ENCODE measurements at regions of chr6 and their contacts with region 1.

Region 1: GRCh38 chr6:157667211-157668008 is 155.6 kb upstream of the SNX9 start:
- DNase-seq: peak; percentile 74
- CTCF ChIP-seq: peak; percentile 71

Region 2: GRCh38 chr6:157314705-157315321 is 352.6 kb before region 1 on chr6:
- CTCF ChIA-PET with region 1: interaction called, 76 read pairs
- POLR2A ChIA-PET with region 1: no interaction called
- DNase-seq: peak; percentile 70
- CTCF ChIP-seq: peak; percentile 78

Region 3: DNA sequence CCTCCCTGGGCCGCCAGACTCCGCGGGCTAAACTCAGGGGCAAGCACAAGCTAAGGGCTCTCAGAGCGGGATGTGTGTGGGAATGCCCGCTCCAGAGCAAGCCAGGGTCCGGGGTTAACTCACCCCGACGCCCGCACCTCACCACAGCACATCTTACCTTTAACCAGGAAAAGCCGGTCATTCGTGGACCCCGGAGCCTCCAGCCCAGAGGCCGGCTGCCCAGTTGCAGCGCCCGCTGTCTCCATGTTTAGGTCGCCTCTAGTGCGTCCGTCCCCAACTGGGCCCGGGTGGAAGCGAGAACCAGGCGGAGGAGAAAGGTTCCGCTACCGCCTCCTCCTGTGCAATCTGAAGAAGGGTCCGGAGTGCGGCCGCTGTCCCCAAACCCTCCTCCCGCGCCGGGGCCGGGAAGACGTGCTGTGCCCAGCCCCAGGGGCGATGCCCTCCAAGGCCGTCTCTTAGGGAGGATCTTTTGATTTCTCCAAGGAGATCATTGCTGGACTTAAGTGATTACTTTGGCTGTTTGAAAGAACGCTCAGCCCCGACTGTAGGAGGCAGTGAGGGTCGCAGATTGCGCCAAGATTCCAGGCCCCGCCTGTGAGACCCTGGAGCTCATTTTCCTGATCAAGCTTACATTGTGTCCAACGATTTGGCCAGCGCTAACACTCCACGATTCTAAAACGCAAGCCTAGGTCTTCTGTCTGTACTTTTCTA is 344.0 kb before region 1 on chr6 and contains the start of gene TMEM242:
- CTCF ChIA-PET with region 1: interaction called, 76 read pairs
- POLR2A ChIA-PET with region 1: no interaction called
- DNase-seq: peak; percentile 86
- CTCF ChIP-seq: no peak

Region 4: GRCh38 chr6:157641837-157642540 is 25.4 kb before region 1 on chr6:
- CTCF ChIA-PET with region 1: no interaction called
- POLR2A ChIA-PET with region 1: no interaction called
- DNase-seq: no peak
- CTCF ChIP-seq: no peak

Region 5: DNA sequence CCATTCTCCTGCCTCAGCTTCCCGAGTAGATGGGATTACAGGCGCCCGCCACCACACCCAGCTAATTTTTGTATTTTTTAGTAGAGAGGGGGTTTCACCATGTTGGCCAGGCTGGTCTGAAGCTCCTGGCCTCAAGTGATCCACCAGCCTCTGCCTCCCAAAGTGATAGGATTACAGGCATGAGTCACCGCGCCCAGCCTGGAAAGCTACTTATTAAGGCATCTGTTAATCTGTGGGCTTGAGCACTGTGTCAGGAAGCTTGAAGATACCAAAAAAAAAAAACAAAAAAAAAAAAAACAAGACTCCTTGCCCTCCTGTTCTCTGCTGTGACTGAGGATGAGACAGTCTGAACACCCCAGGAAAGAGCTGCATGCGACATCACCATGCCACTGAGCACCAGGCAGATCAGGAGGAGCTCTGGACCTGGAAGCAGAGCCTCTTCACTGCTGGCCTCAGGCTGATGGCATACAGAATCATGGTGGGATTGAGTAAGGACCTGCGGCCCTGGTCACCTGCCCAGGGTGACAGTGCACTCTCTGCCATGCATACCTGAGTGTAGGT is 10.9 kb before region 1 on chr6:
- CTCF ChIA-PET with region 1: interaction called, 27 read pairs
- POLR2A ChIA-PET with region 1: no interaction called
- DNase-seq: no peak
- CTCF ChIP-seq: no peak